Activated CD4-positive, alpha-beta memory T cell treated with anti-CD3 and anti-CD28 coated beads for 36 hours (primary cell): ENCODE measurements at regions of chr2 and their contacts with region 1.

Region 1: GRCh38 chr2:222797261-222797660 is 63.6 kb upstream of the ACSL3 start:
- DNase-seq: no peak
- H3K4me3 Mint-ChIP-seq: no peak overlapping the region
- H3K27ac Mint-ChIP-seq: no peak overlapping the region
- H3K4me1 Mint-ChIP-seq: peaks cover 2% of the 10 kb centered on the region
- H3K27me3 Mint-ChIP-seq: peaks cover 6% of the 10 kb centered on the region

Region 2: GRCh38 chr2:222903234-222904220 is 106.3 kb after region 1 on chr2:
- CTCF ChIA-PET with region 1: interaction called, 11 read pairs
- POLR2A ChIA-PET with region 1: no interaction called
- intact Hi-C with region 1: loop called (anchors 1 kb)
- DNase-seq: peak; percentile 34
- H3K4me3 Mint-ChIP-seq: no peak overlapping the region
- H3K27ac Mint-ChIP-seq: no peak overlapping the region
- H3K4me1 Mint-ChIP-seq: peaks cover 13% of the 10 kb centered on the region
- H3K27me3 Mint-ChIP-seq: no peaks in the 10 kb centered on the region

Region 3: GRCh38 chr2:224025874-224026273 is 1228.6 kb after region 1 on chr2:
- CTCF ChIA-PET with region 1: no interaction called
- POLR2A ChIA-PET with region 1: no interaction called
- intact Hi-C with region 1: loop called (anchors 10 kb)
- DNase-seq: peak; percentile 77
- H3K4me3 Mint-ChIP-seq: peak overlapping the region; percentile 30
- H3K27ac Mint-ChIP-seq: peak overlapping the region; percentile 85
- H3K4me1 Mint-ChIP-seq: peaks cover 48% of the 10 kb centered on the region
- H3K27me3 Mint-ChIP-seq: no peaks in the 10 kb centered on the region